ENCODE measurements at regions of chr1 and their contacts with region 1.

Region 1: GRCh38 chr1:25837262-25837875 is 17.6 kb downstream of the MTFR1L start:
- DNase-seq: no peak
- ATAC-seq: peak; percentile 70 to 86 (median 80)
- H3K4me3 ChIP-seq: no peak overlapping the region
- H3K27ac ChIP-seq: no peak overlapping the region
- H3K4me1 ChIP-seq: no peaks in the 10 kb centered on the region
- H3K27me3 ChIP-seq: no peaks in the 10 kb centered on the region
- CTCF ChIP-seq: peak; percentile 41 to 67 (median 58)
- POLR2A ChIP-seq: no peak

Region 2: DNA sequence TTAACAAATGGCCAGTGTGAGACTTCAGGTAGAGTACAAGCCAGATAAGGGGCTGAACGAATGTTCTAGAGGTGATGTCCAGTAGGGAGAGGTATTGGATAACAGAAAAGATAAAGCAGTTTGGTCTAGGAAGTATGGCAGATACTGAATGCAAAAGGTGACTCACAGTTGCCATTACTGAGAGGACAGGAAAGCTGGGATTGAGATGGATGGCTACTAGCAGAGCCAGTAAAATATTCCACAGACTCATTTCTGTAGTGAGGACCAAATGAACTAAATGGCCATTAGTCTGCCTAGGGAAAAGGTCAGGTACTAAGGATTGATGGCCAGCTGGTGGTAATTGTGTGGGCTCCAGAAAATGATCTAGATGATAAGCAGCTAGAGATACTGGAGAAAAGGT is 395.2 kb before region 1 on chr1:
- intact Hi-C with region 1: no loop called
- DNase-seq: no peak
- ATAC-seq: peak in 1 of 4 donors; percentile 73
- H3K4me3 ChIP-seq: no peak overlapping the region
- H3K27ac ChIP-seq: no peak overlapping the region
- H3K4me1 ChIP-seq: peaks cover 0 to 11% (median 0%) of the 10 kb centered on the region in 4 donors
- H3K27me3 ChIP-seq: no peaks in the 10 kb centered on the region
- CTCF ChIP-seq: no peak
- POLR2A ChIP-seq: no peak

Region 3: GRCh38 chr1:25997828-25998761 is 160.7 kb after region 1 on chr1 and contains the start of gene PAFAH2:
- intact Hi-C with region 1: loop called in 1 of 2 experiments (anchors 5 kb)
- DNase-seq: peak; percentile 96 to 98 (median 98)
- ATAC-seq: peak; percentile 98 to 99 (median 98)
- H3K4me3 ChIP-seq: peak within 1 kb of the TSS; percentile 54 to 81 (median 80)
- H3K27ac ChIP-seq: peak within 1 kb of the TSS; percentile 64 to 81 (median 78)
- H3K4me1 ChIP-seq: peaks cover 0 to 14% (median 4%) of the 10 kb centered on the region in 4 donors
- H3K27me3 ChIP-seq: no peaks in the 10 kb centered on the region
- CTCF ChIP-seq: peak; percentile 98 to 100 (median 98)
- POLR2A ChIP-seq: no peak
- total RNA-seq, gene PAFAH2: 13.2 to 25.2 (median 18.6) TPM

Measured in right lobe of liver (tissue), 6 donors.